ENCODE measurements at regions of chr15 and their contacts with region 1.

Region 1: DNA sequence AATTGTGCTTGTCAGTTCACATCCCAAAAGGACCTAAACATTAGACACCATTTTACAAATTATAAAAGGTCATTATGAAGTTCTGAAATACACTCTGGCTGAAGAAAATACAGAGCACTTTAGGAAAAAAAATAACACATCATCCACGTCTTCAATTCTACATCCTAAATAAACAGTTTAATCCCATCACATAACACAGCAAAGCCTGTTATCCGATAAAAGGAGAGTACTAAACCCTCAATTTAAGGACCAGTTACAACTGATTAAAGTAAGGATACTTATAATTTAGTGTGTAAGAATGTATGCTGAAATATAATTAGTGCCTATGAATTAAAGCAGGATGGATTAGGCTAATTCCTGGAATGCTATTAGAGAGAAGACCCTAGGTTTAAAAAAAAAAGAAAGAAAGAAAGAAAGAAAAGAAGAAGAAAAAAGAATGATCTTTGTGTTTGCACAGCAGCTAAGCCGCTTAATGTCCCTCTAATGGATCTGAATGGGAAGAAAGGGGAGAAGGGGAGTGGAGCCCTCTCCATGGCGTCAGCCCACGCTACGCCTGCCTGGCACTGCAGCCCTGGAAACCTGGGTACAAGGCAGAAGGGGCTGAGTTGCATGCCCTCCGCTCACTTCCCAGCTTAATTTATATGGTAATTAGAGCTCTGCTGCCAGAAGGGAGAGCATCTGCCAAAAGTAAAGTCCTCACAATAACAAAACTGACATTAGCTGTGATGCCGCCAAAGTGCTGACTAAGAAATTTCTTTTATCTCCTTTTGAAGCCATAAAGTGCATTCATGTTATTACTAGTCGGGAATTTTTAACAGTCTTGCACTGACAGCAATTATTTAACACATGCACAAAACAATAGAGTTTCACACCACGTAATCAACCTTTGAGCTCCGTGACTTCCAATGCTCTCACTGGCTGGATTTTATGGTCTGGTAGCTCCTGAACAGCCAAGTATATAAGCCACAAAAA is 90.0 kb downstream of the FSIP1 start:
- DNase-seq: no peak
- ATAC-seq: peak; percentile 82
- H3K4me3 ChIP-seq: no peak overlapping the region
- H3K27ac ChIP-seq: no peak overlapping the region
- H3K4me1 ChIP-seq: no peaks in the 10 kb centered on the region
- H3K27me3 ChIP-seq: peaks cover 0 to 2% of the 10 kb centered on the region in 2 experiments; a peak in 1 of 4 replicates
- CTCF ChIP-seq: no peak
- EP300 ChIP-seq: peak; percentile 68 to 71; a peak in 3 of 4 replicates
- POLR2A ChIP-seq: no peak
- RAD21 ChIP-seq: no peak

Region 2: DNA sequence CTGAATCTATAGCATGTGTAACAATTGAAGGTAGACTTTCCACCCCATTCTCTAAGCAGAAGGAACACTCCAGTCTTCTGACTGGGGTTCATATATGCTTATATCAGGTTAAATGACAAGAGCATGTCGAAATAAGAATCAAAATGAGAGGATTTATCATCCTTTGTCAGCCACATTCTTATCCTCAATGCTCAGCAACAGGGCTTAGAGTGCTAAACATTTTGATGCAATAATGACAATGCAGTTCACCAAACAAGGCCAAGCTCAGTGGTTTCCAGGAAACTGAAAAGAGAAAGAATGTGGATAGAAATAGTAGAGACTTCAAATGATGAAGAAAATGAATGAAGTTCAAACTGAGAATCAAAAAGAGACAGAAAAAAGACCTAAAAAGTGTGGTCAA is 12.0 kb after region 1 on chr15:
- CTCF ChIA-PET with region 1: interaction called, 4 read pairs
- POLR2A ChIA-PET with region 1: no interaction called
- RAD21 ChIA-PET with region 1: interaction called, 6 read pairs
- SMC1A ChIA-PET with region 1: interaction called, 15 read pairs
- in situ Hi-C with region 1: no loop called
- intact Hi-C with region 1: no loop called
- DNase-seq: no peak
- ATAC-seq: no peak
- H3K4me3 ChIP-seq: no peak overlapping the region
- H3K27ac ChIP-seq: no peak overlapping the region
- H3K4me1 ChIP-seq: no peaks in the 10 kb centered on the region
- H3K27me3 ChIP-seq: no peaks in the 10 kb centered on the region
- CTCF ChIP-seq: no peak
- EP300 ChIP-seq: no peak
- POLR2A ChIP-seq: no peak
- RAD21 ChIP-seq: no peak

Region 3: DNA sequence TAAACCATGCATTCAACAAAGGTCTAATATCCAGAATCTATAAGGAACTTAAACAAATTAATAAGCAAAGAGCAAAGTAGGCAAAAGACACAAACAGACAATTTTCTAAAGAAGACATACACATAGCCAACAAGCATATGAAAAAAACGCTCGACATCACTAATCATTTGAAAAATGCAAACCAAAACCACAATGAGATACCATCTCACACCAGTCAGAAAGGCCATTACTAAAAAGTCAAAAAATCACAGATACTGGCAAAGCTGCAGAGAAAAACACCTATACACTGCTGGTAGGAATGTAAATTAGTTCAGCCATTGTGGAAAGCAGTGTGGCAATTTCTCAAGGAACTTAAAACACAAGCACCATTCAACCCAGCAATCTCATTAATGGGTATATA is 36.2 kb after region 1 on chr15:
- CTCF ChIA-PET with region 1: no interaction called
- POLR2A ChIA-PET with region 1: no interaction called
- RAD21 ChIA-PET with region 1: no interaction called
- SMC1A ChIA-PET with region 1: no interaction called
- in situ Hi-C with region 1: no loop called
- intact Hi-C with region 1: no loop called
- DNase-seq: no peak
- ATAC-seq: no peak
- H3K4me3 ChIP-seq: no peak overlapping the region
- H3K27ac ChIP-seq: no peak overlapping the region
- H3K4me1 ChIP-seq: no peaks in the 10 kb centered on the region
- H3K27me3 ChIP-seq: no peaks in the 10 kb centered on the region; a peak in 1 of 4 replicates
- CTCF ChIP-seq: no peak
- EP300 ChIP-seq: no peak
- POLR2A ChIP-seq: no peak
- RAD21 ChIP-seq: no peak

Region 4: DNA sequence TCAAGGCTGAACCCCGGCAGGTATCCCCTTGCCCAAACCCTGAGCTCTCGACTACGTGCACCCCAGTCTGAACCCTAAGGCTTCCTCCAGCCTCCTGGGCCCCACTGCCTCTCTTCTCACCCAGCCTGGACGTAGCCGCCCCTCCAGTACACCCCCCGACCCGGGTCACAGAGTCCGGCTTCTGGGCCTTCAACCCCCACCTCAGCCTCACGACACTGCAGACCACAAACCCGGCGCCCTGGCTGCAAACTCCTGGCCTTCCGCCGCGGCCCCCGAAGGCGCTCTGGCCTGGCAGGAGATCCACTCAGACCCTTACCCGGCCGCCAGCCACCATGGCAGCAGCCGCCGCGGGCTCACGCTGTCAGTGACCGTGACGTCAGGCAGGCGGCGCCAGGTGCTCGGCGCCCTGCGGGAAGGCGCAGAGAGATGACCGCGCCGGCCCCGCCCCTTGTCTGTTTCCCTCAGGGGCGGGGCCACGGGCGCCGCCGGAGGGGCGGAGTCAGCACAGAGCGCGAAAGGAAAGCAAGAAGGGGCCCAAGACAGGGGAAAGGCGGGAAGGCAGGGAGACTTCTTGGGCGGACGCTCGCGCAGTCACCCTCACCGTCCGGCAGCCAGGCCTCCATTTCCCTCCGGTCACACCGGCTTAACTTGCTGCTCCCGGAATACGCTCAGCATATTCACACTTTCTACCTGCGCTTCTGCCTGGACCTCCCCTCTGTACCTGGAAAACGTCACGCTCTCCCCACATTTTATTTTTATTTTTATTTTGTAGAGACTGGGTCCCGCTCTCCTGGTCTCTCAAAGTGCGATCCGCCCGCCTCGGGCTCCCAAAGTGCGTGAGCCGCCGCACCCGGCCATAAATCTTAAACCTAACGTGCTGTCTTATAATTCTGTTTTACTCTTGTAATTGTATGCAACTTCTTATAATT is 1062.5 kb after region 1 on chr15 and contains the start of gene RMDN3:
- CTCF ChIA-PET with region 1: no interaction called
- POLR2A ChIA-PET with region 1: no interaction called
- RAD21 ChIA-PET with region 1: no interaction called
- SMC1A ChIA-PET with region 1: no interaction called
- in situ Hi-C with region 1: no loop called
- intact Hi-C with region 1: no loop called
- DNase-seq: peak; percentile 69
- ATAC-seq: peak; percentile 89
- H3K4me3 ChIP-seq: peak within 1 kb of the TSS; percentile 91
- H3K27ac ChIP-seq: peak within 1 kb of the TSS; percentile 86
- H3K4me1 ChIP-seq: peaks cover 3% of the 10 kb centered on the region
- H3K27me3 ChIP-seq: no peaks in the 10 kb centered on the region
- CTCF ChIP-seq: no peak
- EP300 ChIP-seq: no peak; a peak in 1 of 4 replicates
- POLR2A ChIP-seq: peak; percentile 93
- RAD21 ChIP-seq: no peak
- polyA plus RNA-seq, gene RMDN3: 5.7 to 10.2 TPM

Measured in GM12878 (cell line).